HEK293 (cell line): ENCODE measurements at regions of chr19 and their contacts with region 1.

Region 1: GRCh38 chr19:12847159-12848139 is 9.1 kb downstream of the MAST1 start:
- H3K4me3 ChIP-seq: peak overlapping the region; percentile 0; the same call in 1 of the 2 replicates
- H3K27ac ChIP-seq: no peak overlapping the region
- H3K4me1 ChIP-seq: no peaks in the 10 kb centered on the region
- CTCF ChIP-seq: peak; percentile 97

Region 2: DNA sequence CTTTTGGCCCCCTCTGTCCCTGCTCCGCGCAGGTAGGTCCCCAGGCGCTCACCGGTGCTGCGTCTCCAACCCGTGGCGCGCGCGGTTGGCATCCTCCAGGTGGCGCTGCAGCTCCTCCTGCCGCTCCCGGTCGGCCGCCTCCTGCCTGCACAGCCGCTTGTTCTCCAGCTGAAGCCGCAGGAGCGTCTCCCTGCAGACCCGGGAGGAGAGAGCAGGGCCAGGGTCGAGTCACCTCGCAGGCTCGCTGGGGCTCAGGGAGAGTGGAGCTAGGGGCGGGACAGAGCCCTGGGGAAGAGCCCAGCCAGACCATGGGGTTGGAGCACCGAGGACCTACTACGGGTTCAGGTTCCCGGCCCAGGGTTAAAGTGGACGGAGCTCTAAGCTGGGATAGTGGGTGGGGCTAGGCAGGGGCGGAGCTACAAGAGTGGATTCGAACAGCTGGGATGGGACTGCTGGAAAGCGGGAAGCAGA is 81.4 kb before region 1 on chr19:
- CTCF ChIA-PET with region 1: interaction called, 62 read pairs
- POLR2A ChIA-PET with region 1: interaction called, 3 read pairs
- H3K4me3 ChIP-seq: peak overlapping the region; percentile 44
- H3K27ac ChIP-seq: no peak overlapping the region
- H3K4me1 ChIP-seq: no peaks in the 10 kb centered on the region
- CTCF ChIP-seq: peak; percentile 94

Region 3: GRCh38 chr19:12796146-12797071 is 51.0 kb before region 1 on chr19:
- CTCF ChIA-PET with region 1: interaction called, 45 read pairs
- POLR2A ChIA-PET with region 1: interaction called, 6 read pairs
- H3K4me3 ChIP-seq: no peak overlapping the region
- H3K27ac ChIP-seq: no peak overlapping the region
- H3K4me1 ChIP-seq: peaks cover 4% of the 10 kb centered on the region
- CTCF ChIP-seq: peak; percentile 97

Region 4: GRCh38 chr19:12859546-12859945 is 12.1 kb after region 1 on chr19:
- CTCF ChIA-PET with region 1: interaction called, 30 read pairs
- POLR2A ChIA-PET with region 1: no interaction called
- H3K4me3 ChIP-seq: no peak overlapping the region
- H3K27ac ChIP-seq: no peak overlapping the region
- H3K4me1 ChIP-seq: no peaks in the 10 kb centered on the region
- CTCF ChIP-seq: no peak

Region 5: DNA sequence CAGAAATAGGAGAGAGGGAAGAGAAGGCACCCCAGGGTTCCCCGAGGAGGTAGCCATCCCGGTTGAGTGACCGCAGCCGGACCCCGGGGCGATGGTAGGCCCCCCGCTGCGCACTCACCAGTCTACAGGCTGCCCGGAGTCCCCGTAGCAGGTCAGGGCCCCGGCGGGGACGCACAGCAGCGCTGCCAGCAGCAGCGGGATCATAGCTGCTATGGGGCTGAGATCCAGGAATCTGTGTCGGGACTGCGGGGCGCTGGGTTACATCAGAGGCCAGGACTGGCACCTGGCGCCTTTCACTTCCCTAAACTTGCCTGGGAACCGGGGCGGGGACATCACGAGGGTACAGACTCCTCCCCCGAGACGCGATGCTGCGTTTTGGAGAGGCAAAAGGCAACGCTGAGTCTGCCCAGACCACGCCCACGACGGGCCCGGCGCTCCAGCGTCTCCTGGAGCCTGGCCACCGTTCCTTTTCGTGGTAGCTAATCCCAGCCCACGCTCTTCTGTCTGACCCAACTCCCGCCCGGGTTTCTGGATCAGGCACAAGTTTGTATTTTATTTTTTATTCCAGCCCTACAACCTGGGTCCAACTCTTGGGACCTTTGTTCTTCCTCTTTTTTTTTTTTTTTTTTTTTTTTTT is 33.8 kb after region 1 on chr19 and contains the start of gene DNASE2:
- CTCF ChIA-PET with region 1: interaction called, 29 read pairs
- POLR2A ChIA-PET with region 1: interaction called, 4 read pairs
- H3K4me3 ChIP-seq: peak within 1 kb of the TSS; percentile 84
- H3K27ac ChIP-seq: peak within 1 kb of the TSS; percentile 66; the same call in 1 of the 2 replicates
- H3K4me1 ChIP-seq: no peaks in the 10 kb centered on the region
- CTCF ChIP-seq: no peak